ENCODE measurements at regions of chrX and their contacts with region 1.

Region 1: DNA sequence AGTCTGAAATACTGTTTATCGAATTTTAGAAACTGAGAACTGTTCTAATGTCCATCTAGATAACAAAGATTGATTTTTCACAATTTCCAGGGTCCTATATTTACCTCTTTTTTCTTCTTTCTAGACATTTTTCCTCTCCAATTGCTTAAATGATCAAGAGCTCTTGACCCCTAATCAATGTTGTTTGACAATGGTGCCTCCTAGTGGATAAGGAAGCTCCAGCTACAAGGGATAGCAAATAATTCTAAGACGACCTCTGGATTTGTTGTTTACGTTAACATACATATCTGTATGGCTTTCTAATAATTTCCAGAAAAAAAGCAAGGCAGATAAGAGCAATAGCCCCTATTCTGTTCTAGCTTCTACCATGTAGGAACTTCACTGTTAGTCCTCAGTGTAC is 35.8 kb downstream of the GPR82 start:
- DNase-seq: no peak
- ATAC-seq: no peak
- H3K4me3 Mint-ChIP-seq: no peak overlapping the region
- H3K27ac Mint-ChIP-seq: no peak overlapping the region
- H3K4me1 Mint-ChIP-seq: peaks cover 22% of the 10 kb centered on the region
- H3K27me3 Mint-ChIP-seq: no peaks in the 10 kb centered on the region
- CTCF ChIP-seq: no peak

Region 2: GRCh38 chrX:41558531-41558930 is 201.3 kb before region 1 on chrX:
- CTCF ChIA-PET with region 1: interaction called, 18 read pairs
- POLR2A ChIA-PET with region 1: no interaction called
- DNase-seq: no peak
- ATAC-seq: no peak
- H3K4me3 Mint-ChIP-seq: no peak overlapping the region
- H3K27ac Mint-ChIP-seq: no peak overlapping the region
- H3K4me1 Mint-ChIP-seq: peaks cover 12% of the 10 kb centered on the region
- H3K27me3 Mint-ChIP-seq: no peaks in the 10 kb centered on the region
- CTCF ChIP-seq: no peak